ENCODE measurements at regions of chr17 and their contacts with region 1.

Region 1: GRCh38 chr17:21284319-21285163 is at the start of gene MAP2K3:
- DNase-seq: peak; percentile 91 to 96 (median 92)
- H3K4me3 ChIP-seq: peak within 1 kb of the TSS; percentile 76 to 87
- H3K4me3 Mint-ChIP-seq: peak within 1 kb of the TSS; percentile 95 to 99 (median 96)
- H3K27ac ChIP-seq: peak within 1 kb of the TSS; percentile 94
- H3K27ac Mint-ChIP-seq: peak within 1 kb of the TSS; percentile 97 to 99 (median 98)
- H3K4me1 ChIP-seq: peaks cover 56% of the 10 kb centered on the region
- H3K4me1 Mint-ChIP-seq: peaks cover 34 to 77% (median 51%) of the 10 kb centered on the region in 4 donors
- H3K27me3 ChIP-seq: no peaks in the 10 kb centered on the region
- H3K27me3 Mint-ChIP-seq: no peaks in the 10 kb centered on the region
- total RNA-seq, gene MAP2K3: 52.6 to 63.2 TPM

Region 2: DNA sequence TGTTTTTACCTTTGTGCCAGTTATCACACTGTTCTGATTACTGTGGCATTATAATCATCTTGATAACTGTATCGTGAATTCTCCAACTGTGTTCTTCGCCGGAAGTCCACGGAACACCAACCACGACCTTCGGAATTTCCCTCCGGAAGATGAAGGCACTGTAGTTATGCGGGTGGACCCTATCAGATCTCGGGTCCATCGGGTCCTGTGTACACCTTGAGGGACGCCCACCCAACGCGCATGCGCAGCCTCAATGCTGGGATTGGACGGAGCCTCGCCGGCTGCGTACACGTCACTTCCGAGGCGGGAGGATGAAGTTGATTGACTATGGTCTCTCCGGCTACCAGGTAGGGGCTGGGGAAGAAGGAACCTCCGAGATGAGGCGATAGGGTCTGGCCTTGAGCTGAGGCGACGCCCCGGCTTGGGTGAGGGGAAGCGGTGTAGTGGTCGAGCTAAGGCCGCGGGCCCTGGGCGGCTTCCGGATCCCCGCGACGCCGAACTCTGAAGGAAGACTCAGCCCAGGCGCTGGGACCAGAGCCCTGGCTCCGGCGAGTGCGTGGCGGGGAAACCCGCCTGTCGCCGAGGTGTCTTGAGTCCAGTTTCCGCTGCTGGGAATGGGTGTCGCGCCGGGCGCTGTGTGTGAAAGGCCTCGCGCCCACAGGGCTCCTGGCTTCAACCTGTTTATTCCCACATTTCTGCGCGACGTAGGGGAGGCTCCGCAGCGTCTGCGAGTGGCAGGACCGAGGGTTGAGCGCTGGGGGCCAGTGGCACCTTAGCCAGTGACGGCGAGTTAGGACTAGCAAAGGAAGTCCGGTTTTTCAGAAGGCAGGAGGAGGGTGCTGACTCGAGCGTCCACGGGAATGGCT is 157.7 kb before region 1 on chr17 and contains the start of gene DHRS7B:
- CTCF ChIA-PET with region 1: interaction called, 69 read pairs
- POLR2A ChIA-PET with region 1: interaction called, 8 read pairs
- intact Hi-C with region 1: loop called (anchors 1 kb)
- DNase-seq: peak; percentile 94 to 97 (median 94)
- H3K4me3 ChIP-seq: peak within 1 kb of the TSS; percentile 31 to 97
- H3K4me3 Mint-ChIP-seq: peak within 1 kb of the TSS; percentile 91 to 98 (median 96)
- H3K27ac ChIP-seq: peak within 1 kb of the TSS; percentile 85
- H3K27ac Mint-ChIP-seq: peak within 1 kb of the TSS; percentile 95 to 99 (median 97)
- H3K4me1 ChIP-seq: peaks cover 27% of the 10 kb centered on the region
- H3K4me1 Mint-ChIP-seq: peaks cover 20 to 42% (median 35%) of the 10 kb centered on the region in 4 donors
- H3K27me3 ChIP-seq: no peaks in the 10 kb centered on the region
- H3K27me3 Mint-ChIP-seq: no peaks in the 10 kb centered on the region
- total RNA-seq, gene DHRS7B: 8.2 to 9.5 TPM

Region 3: DNA sequence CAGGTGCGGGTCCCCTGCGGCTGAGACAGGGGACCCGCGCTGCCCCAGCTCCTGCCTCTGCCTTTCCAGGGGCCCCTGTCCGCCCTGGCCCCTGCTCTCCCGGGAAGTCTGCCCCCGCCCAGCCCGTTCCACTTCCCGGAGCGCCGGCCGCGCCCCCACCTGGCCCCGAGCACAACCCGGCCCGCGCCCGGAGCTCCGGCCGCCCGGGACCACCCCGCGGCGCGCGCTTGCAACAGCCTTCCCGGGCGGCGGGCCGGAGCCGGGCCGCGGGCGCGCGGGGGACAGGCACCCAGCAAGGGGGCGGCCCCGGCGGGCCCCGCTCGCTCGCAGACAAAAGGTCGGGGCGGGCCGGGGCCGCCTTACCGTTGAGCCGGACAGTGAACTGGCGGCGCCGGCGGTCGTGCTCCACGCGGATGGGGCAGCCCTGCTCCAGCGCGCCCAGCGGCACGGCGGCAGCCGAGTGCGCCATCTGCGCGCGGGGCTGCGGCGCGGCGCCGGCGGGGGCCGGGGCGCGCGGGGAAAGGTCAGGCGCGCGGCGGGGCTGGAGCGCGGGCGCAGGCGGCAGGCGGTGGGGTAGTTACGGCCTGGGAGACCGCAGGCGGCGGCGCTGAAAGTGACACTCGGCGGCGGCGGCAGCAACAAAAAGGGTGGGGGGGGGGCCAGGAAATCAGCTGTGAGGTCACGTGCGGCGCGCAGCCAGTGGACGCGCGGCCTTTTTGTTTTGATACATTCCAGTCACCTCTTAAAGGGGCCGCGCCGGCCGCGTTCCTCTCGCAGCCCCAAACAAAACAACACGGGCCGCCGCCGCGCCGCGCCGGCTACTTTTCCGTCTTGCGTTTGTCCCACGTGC is 31.5 kb before region 1 on chr17 and contains the start of gene NATD1:
- CTCF ChIA-PET with region 1: interaction called, 25 read pairs
- POLR2A ChIA-PET with region 1: interaction called, 16 read pairs
- intact Hi-C with region 1: loop called (anchors 1 kb)
- DNase-seq: peak; percentile 74 to 86 (median 80)
- H3K4me3 ChIP-seq: peak within 1 kb of the TSS; percentile 38 to 71
- H3K4me3 Mint-ChIP-seq: peak within 1 kb of the TSS; percentile 88 to 95 (median 90)
- H3K27ac ChIP-seq: peak within 1 kb of the TSS; percentile 62
- H3K27ac Mint-ChIP-seq: peak within 1 kb of the TSS; percentile 90 to 95 (median 91)
- H3K4me1 ChIP-seq: peaks cover 27% of the 10 kb centered on the region
- H3K4me1 Mint-ChIP-seq: peaks cover 24 to 59% (median 34%) of the 10 kb centered on the region in 4 donors
- H3K27me3 ChIP-seq: no peaks in the 10 kb centered on the region
- H3K27me3 Mint-ChIP-seq: no peaks in the 10 kb centered on the region
- total RNA-seq, gene NATD1: 13.1 to 13.5 TPM

Region 4: GRCh38 chr17:21318439-21318838 is 33.9 kb after region 1 on chr17:
- CTCF ChIA-PET with region 1: interaction called, 3 read pairs
- POLR2A ChIA-PET with region 1: interaction called, 4 read pairs
- intact Hi-C with region 1: loop called (anchors 1 kb)
- DNase-seq: no peak
- H3K4me3 ChIP-seq: no peak overlapping the region
- H3K4me3 Mint-ChIP-seq: no peak overlapping the region
- H3K27ac ChIP-seq: no peak overlapping the region
- H3K27ac Mint-ChIP-seq: peak overlapping the region in 1 of 7 donors; percentile 74
- H3K4me1 ChIP-seq: no peaks in the 10 kb centered on the region
- H3K4me1 Mint-ChIP-seq: peaks cover 4 to 8% (median 6%) of the 10 kb centered on the region in 4 donors
- H3K27me3 ChIP-seq: no peaks in the 10 kb centered on the region
- H3K27me3 Mint-ChIP-seq: no peaks in the 10 kb centered on the region

Region 5: DNA sequence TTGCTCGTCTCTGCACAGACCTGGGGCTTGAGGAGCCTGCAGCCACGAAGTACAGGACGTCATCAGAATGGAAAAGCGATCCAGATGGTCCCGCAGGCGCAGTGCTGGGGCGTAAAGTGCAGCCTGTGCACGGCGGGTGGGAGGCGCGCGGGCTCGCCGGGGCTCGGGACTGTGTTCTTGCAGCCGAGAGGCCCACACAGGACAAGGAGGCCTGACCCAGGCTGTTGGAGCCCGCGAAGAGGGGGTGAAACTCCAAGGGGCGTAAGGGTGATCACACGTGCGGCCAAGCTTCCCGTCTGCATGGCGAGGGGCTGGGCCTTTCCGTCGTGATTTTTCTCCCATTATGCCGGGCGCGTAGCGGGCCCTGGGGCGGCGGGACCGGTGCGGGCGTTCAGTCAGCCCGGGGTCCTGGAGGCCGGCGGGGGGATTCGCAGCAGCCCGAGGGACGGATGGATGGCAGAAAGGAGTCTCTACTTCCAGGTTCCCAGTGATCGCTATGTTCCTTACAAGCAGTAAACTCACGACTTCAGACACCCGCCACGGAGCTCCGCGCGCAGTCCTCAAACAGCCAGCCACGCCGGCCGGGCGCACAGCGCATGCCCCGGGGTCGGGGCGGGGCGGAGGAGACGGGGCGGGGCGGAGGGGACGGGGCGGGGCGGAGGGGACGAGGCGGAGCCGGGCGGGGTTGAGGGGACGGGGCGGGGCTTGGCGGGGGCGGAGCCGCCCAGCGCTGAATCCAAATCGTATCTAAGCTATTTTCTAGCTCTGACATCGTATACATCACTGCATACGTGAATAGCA is 266.7 kb after region 1 on chr17:
- CTCF ChIA-PET with region 1: no interaction called
- POLR2A ChIA-PET with region 1: no interaction called
- intact Hi-C with region 1: loop called (anchors 5 kb)
- DNase-seq: peak; percentile 74 to 81 (median 76)
- H3K4me3 ChIP-seq: peak overlapping the region in 1 of 2 donors; percentile 73
- H3K4me3 Mint-ChIP-seq: peak overlapping the region; percentile 83 to 92 (median 88)
- H3K27ac ChIP-seq: peak overlapping the region; percentile 34
- H3K27ac Mint-ChIP-seq: peak overlapping the region in 5 of 7 donors; percentile 34 to 61 (median 50)
- H3K4me1 ChIP-seq: peaks cover 18% of the 10 kb centered on the region
- H3K4me1 Mint-ChIP-seq: peaks cover 11 to 33% (median 20%) of the 10 kb centered on the region in 4 donors
- H3K27me3 ChIP-seq: no peaks in the 10 kb centered on the region
- H3K27me3 Mint-ChIP-seq: peaks cover 13 to 17% of the 10 kb centered on the region in 2 donors

Measured in CD4-positive, alpha-beta memory T cell (primary cell).